Activated CD8-positive, alpha-beta T cell treated with anti-CD3 and anti-CD28 coated beads for 36 hours (primary cell): ENCODE measurements at regions of chr7 and their contacts with region 1.

Region 1: DNA sequence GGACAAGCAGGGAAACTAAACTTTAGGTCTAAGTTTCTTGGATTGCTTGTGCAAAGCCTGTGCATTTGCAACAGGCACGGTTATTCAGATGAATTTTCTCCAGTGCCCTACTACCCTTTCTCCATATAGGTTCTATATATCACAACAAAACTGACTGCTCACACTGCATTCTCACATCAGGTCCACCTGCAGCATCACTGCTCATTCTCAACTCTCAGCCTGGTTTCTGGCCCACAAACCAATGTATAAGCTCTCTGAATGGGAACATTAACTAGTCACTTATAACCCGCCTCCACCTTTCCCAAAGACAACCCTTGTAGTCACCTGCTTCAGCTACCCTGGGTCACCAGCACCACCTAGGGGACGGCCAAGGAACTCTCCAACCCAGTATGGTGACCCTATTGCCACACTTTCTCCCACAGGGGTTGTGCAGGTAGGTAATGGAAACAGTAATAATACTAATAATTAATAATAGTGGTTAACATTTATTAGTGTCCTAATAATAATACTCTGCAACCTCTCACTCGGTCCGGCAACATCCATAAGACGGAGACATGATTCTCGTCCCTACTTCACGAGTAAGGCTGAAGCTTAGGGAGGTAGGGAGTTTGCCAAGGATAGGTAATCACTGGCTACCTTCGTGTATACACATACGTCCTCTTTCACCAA is 97.3 kb downstream of the CLEC2L start:
- DNase-seq: peak; percentile 72
- ATAC-seq: peak; percentile 90
- H3K4me3 Mint-ChIP-seq: no peak overlapping the region
- H3K27ac Mint-ChIP-seq: no peak overlapping the region
- H3K4me1 Mint-ChIP-seq: peaks cover 17% of the 10 kb centered on the region
- H3K27me3 Mint-ChIP-seq: no peaks in the 10 kb centered on the region
- CTCF ChIP-seq: peak; percentile 77

Region 2: DNA sequence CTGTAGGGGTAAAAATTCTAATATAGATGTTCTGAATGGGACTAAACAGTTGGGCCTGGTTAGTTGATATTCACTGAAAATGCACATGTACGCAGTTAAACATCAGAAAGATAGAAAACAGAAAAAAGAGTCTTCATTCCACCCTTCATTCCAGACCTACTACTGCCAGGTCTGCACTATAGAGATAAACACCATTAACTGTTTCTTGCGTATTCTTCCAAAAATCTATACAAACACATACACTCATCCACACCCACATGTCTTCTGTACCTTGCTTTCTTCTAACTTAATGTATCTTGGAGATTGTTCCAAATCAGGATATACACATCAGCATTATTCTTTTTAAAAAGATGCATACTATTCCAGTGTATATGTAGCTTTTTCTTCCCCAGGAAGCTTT is 111.3 kb before region 1 on chr7:
- CTCF ChIA-PET with region 1: interaction called, 13 read pairs
- POLR2A ChIA-PET with region 1: no interaction called
- intact Hi-C with region 1: no loop called
- DNase-seq: no peak
- ATAC-seq: no peak
- H3K4me3 Mint-ChIP-seq: no peak overlapping the region
- H3K27ac Mint-ChIP-seq: no peak overlapping the region
- H3K4me1 Mint-ChIP-seq: no peaks in the 10 kb centered on the region
- H3K27me3 Mint-ChIP-seq: no peaks in the 10 kb centered on the region
- CTCF ChIP-seq: no peak

Region 3: DNA sequence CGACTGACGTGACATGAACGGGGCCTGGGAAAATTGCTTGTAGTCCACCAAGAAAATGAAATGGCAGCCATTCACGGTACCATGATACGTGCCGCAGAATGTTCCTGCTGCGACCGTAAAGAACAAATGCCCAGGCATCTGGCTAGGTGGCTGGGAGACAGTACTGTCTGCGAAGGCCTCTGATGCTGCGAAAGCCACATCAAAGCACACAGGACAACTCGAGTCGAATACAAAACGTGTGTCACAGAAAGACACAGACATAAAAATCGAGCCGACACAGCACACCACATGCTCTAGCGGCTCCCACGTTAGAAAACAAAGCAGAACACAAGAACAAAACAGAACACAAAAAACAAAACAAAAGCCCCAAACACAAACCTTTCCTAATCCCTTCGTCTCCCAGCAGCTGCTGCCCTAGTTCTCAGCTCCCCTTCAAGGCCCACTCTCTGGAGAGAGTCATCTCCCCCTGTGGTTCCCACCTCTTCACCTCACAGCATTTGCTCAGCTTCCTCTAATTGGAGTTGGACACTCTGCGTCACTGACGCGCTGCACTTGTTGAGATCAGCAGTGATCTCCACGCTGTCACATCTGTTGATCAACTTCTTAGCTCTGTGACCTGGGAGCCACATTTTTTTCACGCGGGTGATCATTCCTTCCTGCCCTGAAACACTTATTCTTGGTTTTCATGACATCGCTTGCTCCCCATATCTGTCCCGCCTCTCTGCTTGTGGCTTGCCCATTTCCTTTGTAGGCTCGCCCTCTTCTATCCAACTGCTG is 14.9 kb after region 1 on chr7:
- CTCF ChIA-PET with region 1: interaction called, 36 read pairs
- POLR2A ChIA-PET with region 1: interaction called, 3 read pairs
- intact Hi-C with region 1: no loop called
- DNase-seq: peak; percentile 82
- ATAC-seq: peak; percentile 95
- H3K4me3 Mint-ChIP-seq: peak overlapping the region; percentile 63
- H3K27ac Mint-ChIP-seq: peak overlapping the region; percentile 90
- H3K4me1 Mint-ChIP-seq: peaks cover 44% of the 10 kb centered on the region
- H3K27me3 Mint-ChIP-seq: no peaks in the 10 kb centered on the region
- CTCF ChIP-seq: no peak

Region 4: GRCh38 chr7:139808427-139808826 is 187.6 kb after region 1 on chr7:
- CTCF ChIA-PET with region 1: no interaction called
- POLR2A ChIA-PET with region 1: no interaction called
- intact Hi-C with region 1: no loop called
- DNase-seq: no peak
- ATAC-seq: no peak
- H3K4me3 Mint-ChIP-seq: no peak overlapping the region
- H3K27ac Mint-ChIP-seq: no peak overlapping the region
- H3K4me1 Mint-ChIP-seq: peaks cover 3% of the 10 kb centered on the region
- H3K27me3 Mint-ChIP-seq: peaks cover 4% of the 10 kb centered on the region
- CTCF ChIP-seq: no peak

Region 5: DNA sequence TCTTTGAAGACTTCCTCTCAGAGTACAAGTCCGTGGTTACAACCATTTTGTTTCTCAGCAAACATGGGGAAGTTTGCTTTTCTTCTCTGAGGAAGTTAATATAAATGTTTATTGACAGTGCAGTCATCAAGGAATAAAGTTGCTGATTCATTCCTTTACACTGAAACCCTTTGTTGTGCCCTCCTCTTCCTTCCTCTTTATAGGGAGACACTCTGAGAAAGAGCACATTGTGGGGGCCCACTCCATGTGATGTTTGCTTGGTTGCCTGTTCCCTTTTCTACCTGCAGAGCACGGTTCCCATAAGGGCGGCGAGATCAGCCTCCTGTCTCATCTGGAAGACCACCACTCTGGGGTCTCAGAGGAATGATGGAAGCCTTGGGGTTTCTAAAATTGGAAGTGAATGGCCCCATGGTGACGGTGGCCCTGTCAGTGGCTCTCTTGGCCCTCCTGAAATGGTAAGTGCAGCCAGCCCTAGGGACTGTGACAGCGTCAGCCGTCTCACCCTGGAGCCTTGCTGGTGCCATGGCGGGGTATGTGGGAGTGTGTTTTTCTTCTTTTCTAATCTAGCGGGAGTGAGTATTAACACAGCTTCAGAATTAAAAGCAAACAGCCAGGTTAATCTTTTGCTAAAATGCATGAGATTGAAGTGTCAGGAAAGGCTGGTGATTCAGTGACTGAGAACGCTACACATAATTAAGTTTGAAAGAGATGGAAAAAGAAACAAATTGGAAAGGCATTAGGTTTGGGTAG is 208.4 kb after region 1 on chr7 and contains the start of gene TBXAS1:
- CTCF ChIA-PET with region 1: interaction called, 14 read pairs
- POLR2A ChIA-PET with region 1: no interaction called
- intact Hi-C with region 1: no loop called
- DNase-seq: peak; percentile 15
- ATAC-seq: peak; percentile 61
- H3K4me3 Mint-ChIP-seq: peak within 1 kb of the TSS; percentile 50
- H3K27ac Mint-ChIP-seq: peak within 1 kb of the TSS; percentile 39
- H3K4me1 Mint-ChIP-seq: peaks cover 16% of the 10 kb centered on the region
- H3K27me3 Mint-ChIP-seq: peaks cover 3% of the 10 kb centered on the region
- CTCF ChIP-seq: no peak
- total RNA-seq, gene TBXAS1: 1.5 to 2.1 TPM

Region 6: DNA sequence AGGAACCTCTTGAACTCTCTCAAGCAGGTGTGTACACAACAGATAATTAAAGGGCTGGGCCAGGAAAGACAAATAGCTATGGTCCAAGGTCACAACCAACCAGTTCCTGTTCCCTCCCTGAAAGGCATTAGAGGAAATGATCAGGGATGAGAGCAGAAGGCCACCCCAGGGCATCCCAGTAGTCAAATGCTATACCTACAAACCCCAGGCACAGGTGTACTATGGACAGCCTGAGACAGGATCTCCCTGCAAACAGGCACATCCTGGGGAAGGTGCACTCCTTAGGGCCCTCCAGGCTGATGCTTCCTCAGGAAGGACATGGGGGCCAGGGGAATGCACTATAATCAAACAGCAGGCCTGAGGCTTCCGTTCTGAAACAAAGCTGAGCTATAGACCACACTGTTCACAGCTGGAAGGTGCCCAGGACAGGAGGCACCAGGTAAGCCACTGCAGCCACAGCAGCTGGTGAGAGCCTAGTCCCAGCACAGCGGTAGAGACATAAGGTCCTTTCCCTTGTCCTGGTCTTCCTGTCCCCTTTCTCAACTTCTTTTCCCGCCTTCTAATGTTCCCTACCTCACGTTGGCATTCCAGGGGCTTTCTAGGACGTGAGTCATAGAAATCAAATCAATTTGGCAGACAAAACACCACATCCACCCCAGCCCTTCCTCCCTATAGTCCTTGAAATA is 428.7 kb after region 1 on chr7:
- CTCF ChIA-PET with region 1: no interaction called
- POLR2A ChIA-PET with region 1: no interaction called
- intact Hi-C with region 1: no loop called
- DNase-seq: no peak
- ATAC-seq: no peak
- H3K4me3 Mint-ChIP-seq: no peak overlapping the region
- H3K27ac Mint-ChIP-seq: no peak overlapping the region
- H3K4me1 Mint-ChIP-seq: peaks cover 14% of the 10 kb centered on the region
- H3K27me3 Mint-ChIP-seq: no peaks in the 10 kb centered on the region
- CTCF ChIP-seq: no peak